ENCODE measurements at regions of chr15 and their contacts with region 1.

Region 1: GRCh38 chr15:73972984-73973682 is 19.0 kb downstream of the STOML1 start:
- DNase-seq: no peak
- H3K4me3 ChIP-seq: peak overlapping the region; percentile 18; the same call in 1 of the 2 replicates
- CTCF ChIP-seq: peak; percentile 91

Region 2: GRCh38 chr15:73991726-73992593 is 18.8 kb after region 1 on chr15 and contains the start of gene STOML1:
- CTCF ChIA-PET with region 1: interaction called, 112 read pairs
- POLR2A ChIA-PET with region 1: interaction called, 3 read pairs
- DNase-seq: no peak
- H3K4me3 ChIP-seq: peak within 1 kb of the TSS; percentile 71
- CTCF ChIP-seq: peak; percentile 85

Region 3: DNA sequence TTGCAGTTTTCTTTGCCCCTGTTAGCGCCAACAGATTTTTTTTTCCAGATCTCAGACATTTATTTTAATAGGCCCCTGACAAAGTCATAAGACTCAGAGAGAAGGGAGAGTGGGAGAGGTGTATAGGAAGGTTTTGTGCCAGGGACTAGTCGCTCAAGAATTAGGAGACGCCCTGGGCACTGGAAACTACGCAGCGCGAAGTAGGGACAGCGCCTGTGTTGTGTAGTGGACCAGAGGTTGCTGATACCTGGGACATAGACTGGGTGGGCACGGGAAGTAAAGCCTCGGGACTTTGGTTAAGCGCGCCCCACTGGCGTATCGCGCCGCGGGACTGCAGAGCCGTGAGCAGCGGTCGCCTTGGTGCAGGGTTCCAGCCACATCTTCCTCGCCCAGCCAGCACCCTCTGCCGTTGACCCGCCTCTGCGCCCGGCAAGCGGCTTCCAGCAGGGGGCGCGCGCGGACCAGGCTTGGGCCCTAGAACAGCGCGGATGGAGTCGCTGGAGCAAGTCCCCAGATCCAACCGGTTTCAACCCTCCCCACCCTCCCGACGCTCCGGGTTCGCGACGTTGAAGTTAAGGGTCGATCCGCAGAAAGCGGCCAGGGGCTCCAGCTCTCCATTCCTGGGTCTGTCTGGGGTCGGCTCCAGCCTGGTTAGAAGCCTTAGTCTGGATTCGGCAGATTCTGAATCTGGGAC is 154.3 kb after region 1 on chr15:
- CTCF ChIA-PET with region 1: interaction called, 23 read pairs
- POLR2A ChIA-PET with region 1: no interaction called
- DNase-seq: peak; percentile 5
- H3K4me3 ChIP-seq: peak overlapping the region; percentile 51
- CTCF ChIP-seq: peak; percentile 100

Region 4: DNA sequence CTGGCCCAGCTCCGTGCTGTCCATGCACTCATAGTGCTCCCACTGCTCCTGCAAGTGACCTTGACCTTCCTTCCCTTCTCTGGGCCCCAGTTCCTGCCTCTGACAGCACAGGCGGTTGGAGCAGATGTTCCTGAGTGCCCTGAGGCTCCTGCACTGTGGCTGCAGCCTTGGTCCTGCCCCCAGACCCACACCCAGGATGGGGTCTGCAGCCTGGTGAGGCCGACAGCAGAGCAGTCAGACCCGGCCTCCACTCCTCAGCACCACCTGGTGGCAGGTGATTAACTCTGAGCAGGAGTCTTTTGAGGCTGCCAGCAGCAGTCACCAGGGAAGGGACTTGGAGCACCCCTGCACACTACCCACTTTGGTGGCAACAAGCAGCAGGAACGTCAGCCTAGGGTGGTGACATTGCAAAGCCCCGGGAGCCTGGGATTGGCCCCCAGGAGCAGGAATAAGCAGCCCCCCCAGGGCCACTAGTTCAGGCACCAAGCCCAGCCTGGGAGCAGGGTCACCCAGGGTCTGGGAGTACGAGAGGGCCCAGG is 329.8 kb after region 1 on chr15:
- CTCF ChIA-PET with region 1: interaction called, 66 read pairs
- POLR2A ChIA-PET with region 1: no interaction called
- DNase-seq: no peak
- H3K4me3 ChIP-seq: no peak overlapping the region
- CTCF ChIP-seq: peak; percentile 68

Measured in AG04449 (cell line).